ENCODE measurements at regions of chr10 and their contacts with region 1.

Region 1: GRCh38 chr10:88932539-88933256 is 19.9 kb downstream of the ACTA2 start:
- DNase-seq: peak; percentile 72
- H3K4me3 ChIP-seq: no peak overlapping the region
- H3K27ac ChIP-seq: peak overlapping the region in 1 of 2 donors; percentile 25
- H3K4me1 ChIP-seq: no peaks in the 10 kb centered on the region
- H3K27me3 ChIP-seq: no peaks in the 10 kb centered on the region
- CTCF ChIP-seq: peak; percentile 77 to 95 (median 88)
- POLR2A ChIP-seq: no peak

Region 2: GRCh38 chr10:88651101-88651551 is 281.6 kb before region 1 on chr10:
- intact Hi-C with region 1: no loop called
- DNase-seq: no peak
- H3K4me3 ChIP-seq: no peak overlapping the region
- H3K27ac ChIP-seq: no peak overlapping the region
- H3K4me1 ChIP-seq: no peaks in the 10 kb centered on the region
- H3K27me3 ChIP-seq: no peaks in the 10 kb centered on the region
- CTCF ChIP-seq: no peak
- POLR2A ChIP-seq: no peak

Region 3: GRCh38 chr10:88979153-88979562 is 46.5 kb after region 1 on chr10:
- intact Hi-C with region 1: no loop called
- DNase-seq: peak; percentile 28
- H3K4me3 ChIP-seq: no peak overlapping the region
- H3K27ac ChIP-seq: peak overlapping the region; percentile 46 to 58
- H3K4me1 ChIP-seq: no peaks in the 10 kb centered on the region
- H3K27me3 ChIP-seq: no peaks in the 10 kb centered on the region
- CTCF ChIP-seq: no peak
- POLR2A ChIP-seq: no peak

Region 4: DNA sequence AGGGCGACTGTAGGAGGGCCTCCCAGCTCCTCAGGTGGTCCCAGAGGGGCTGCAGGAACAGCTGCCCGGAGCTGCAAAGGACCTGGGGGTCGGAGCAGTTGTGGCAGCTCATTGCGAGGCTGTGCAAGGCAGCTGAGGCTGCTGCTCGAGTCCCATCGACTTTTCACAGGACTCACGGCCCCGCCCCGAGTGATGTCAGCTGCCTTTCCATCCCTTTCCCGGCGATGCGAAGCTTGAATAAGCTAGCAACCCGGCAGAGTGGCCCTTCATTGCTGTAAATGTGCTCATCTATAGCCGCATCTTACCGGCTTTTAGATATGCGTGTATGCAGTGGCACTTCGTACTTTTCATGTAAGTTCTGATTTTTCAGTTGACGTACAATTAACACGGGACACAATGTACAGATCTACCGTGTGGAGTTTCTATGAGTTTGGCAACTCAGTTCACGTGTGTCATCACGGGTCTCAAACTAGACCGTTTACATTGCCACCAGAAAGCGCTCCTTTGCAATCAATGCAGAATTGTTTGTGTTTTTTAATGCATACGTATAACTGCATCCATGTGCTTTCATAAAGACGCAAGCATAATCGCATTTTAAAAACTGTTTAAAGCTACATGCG is 274.6 kb after region 1 on chr10 and contains the start of gene CH25H:
- intact Hi-C with region 1: loop called (anchors 5 kb)
- DNase-seq: peak; percentile 50
- H3K4me3 ChIP-seq: peak within 1 kb of the TSS; percentile 32 to 40
- H3K27ac ChIP-seq: peak within 1 kb of the TSS; percentile 41 to 56
- H3K4me1 ChIP-seq: no peaks in the 10 kb centered on the region
- H3K27me3 ChIP-seq: no peaks in the 10 kb centered on the region
- CTCF ChIP-seq: no peak
- POLR2A ChIP-seq: peak; percentile 50
- total RNA-seq, gene CH25H: 1.1 to 1.6 TPM